ENCODE measurements at regions of chr3 and their contacts with region 1.

Region 1: DNA sequence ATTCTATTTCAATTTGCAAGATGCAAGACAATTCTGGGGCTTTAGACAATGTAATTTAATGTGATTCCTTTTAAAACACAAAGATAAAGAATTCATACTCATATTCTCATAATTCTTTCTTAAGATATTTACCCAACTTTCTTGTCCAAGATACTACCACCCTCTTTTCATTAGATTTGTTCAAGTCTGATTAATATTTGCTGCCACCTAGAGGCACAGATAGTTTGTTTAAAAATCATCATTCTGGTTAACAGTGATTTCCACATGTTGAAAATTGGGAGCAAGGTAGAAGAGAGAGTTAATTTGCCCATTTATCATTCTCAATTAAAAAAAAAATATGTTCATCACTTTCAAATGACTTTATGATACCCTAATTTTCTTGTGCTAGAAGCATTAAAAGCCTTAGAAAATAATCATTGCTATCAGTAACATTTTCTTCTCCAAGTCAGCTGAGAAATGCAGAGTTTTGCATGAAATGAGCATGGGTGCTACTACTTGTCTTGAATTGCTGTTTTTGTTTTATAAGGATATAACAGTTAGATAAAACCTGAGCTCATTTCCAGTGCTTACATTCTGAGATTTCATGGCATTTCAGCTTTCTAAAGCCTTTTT is 11.6 kb downstream of the TAMM41 start:
- DNase-seq: no peak
- H3K4me3 ChIP-seq: no peak overlapping the region
- H3K27me3 ChIP-seq: no peaks in the 10 kb centered on the region
- CTCF ChIP-seq: peak; percentile 49

Region 2: GRCh38 chr3:11791339-11792128 is 43.6 kb before region 1 on chr3:
- CTCF ChIA-PET with region 1: no interaction called
- POLR2A ChIA-PET with region 1: no interaction called
- DNase-seq: no peak
- H3K4me3 ChIP-seq: no peak overlapping the region
- H3K27me3 ChIP-seq: no peaks in the 10 kb centered on the region
- CTCF ChIP-seq: no peak

Region 3: GRCh38 chr3:11846281-11847034 is 11.3 kb after region 1 on chr3 and contains the start of gene TAMM41:
- CTCF ChIA-PET with region 1: interaction called, 18 read pairs
- POLR2A ChIA-PET with region 1: no interaction called
- DNase-seq: peak; percentile 59
- H3K4me3 ChIP-seq: peak within 1 kb of the TSS; percentile 75
- H3K27me3 ChIP-seq: no peaks in the 10 kb centered on the region; the same call in 1 of the 2 replicates
- CTCF ChIP-seq: peak; percentile 85
- polyA plus RNA-seq, gene TAMM41: 10.0 and 12.0 TPM in 2 replicates